OCI-LY7 (cell line): ENCODE measurements at regions of chr20 and their contacts with region 1.

Region 1: DNA sequence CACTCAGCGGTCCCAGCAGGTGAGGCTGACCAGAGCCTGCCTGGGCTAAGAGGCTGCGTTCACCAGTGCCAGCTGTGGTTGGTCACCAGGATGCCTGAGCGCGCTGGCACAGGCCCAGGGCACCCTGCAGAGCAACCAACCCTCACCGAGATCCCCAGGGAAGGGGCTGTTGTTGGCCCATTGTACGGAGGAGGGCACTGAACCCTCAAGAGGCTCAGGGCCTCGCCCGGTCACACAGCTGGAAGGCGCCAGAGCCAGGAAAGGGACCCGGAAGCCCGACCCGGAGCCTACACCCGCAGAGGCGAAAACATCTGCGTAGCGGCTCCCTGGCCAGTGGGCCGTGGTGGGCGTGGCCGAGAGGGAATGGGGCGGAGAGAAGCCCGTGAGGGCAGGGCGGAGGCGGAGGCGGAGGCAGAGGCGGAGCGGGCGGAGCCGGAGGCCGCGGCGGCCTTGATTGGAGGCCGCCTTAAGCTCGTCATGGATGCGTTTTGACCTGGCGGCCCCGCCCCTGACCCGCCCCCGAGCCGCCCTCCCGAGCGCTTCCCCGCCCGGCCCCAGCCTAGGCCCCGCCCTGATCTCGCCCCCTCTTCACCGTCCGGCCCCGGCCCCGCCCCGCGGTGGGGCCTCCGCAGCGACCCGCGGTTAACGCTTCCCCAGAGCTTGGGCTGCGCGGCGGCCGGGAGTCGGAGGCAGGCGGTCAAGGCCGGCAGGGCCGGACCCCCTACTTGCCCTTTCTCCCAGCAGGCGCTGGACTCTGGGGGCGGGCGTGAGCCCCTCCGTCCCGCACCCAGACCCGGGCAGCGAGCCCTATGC is 2.2 kb upstream of the MRGBP start:
- DNase-seq: peak; percentile 95
- H3K4me3 ChIP-seq: peak overlapping the region; percentile 78
- H3K27ac ChIP-seq: peak overlapping the region; percentile 83
- H3K4me1 ChIP-seq: peaks cover 47% of the 10 kb centered on the region
- CTCF ChIP-seq: no peak

Region 2: GRCh38 chr20:62407221-62407992 is 386.7 kb before region 1 on chr20 and contains the start of gene CABLES2:
- CTCF ChIA-PET with region 1: no interaction called
- POLR2A ChIA-PET with region 1: no interaction called
- intact Hi-C with region 1: loop called (anchors 5 kb)
- DNase-seq: peak; percentile 96
- H3K4me3 ChIP-seq: peak within 1 kb of the TSS; percentile 86
- H3K27ac ChIP-seq: peak within 1 kb of the TSS; percentile 69
- H3K4me1 ChIP-seq: peaks cover 42% of the 10 kb centered on the region
- CTCF ChIP-seq: peak; percentile 28; the same call in 1 of the 2 replicates
- total RNA-seq, gene CABLES2: 11.1 and 14.8 TPM in 2 replicates

Region 3: DNA sequence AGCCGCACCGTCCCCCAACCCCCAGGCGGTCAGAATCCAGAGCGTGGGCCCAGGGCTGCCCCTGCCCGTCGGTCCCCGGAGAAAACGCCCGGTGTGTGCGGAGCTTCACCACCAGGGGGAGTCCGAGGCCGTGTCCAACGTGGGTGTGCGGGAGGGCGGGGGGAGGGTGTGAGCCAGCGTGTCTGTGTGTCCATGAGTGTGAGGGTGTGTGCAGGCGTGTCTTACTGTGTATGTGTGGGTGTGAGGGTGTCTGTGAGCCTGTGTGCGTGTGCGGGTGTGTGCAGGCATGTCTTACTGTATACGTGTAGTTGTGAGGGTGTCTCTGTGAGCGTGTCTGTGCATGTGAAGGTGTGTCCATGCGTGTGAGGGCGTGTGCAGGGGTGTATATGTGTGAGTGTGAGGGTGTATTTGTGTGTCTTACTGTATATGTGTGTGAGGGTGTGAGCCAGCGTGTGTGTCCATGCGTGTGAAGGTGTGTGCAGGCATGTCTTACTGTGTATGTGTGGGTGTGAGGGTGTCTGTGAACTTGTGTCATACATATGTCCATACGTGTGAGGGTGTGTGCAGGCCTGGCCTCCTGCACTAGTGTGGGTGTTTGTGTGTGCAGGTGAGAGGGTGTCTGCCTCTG is 293.8 kb before region 1 on chr20:
- CTCF ChIA-PET with region 1: no interaction called
- POLR2A ChIA-PET with region 1: no interaction called
- intact Hi-C with region 1: loop called (anchors 2 kb)
- DNase-seq: peak; percentile 73
- H3K4me3 ChIP-seq: no peak overlapping the region
- H3K27ac ChIP-seq: no peak overlapping the region
- H3K4me1 ChIP-seq: peaks cover 18% of the 10 kb centered on the region
- CTCF ChIP-seq: peak; percentile 86

Region 4: GRCh38 chr20:62623488-62624324 is 170.4 kb before region 1 on chr20:
- CTCF ChIA-PET with region 1: no interaction called
- POLR2A ChIA-PET with region 1: interaction called, 3 read pairs
- intact Hi-C with region 1: loop called (anchors 1 kb)
- DNase-seq: peak; percentile 95
- H3K4me3 ChIP-seq: peak overlapping the region; percentile 58
- H3K27ac ChIP-seq: peak overlapping the region; percentile 75
- H3K4me1 ChIP-seq: peaks cover 51% of the 10 kb centered on the region
- CTCF ChIP-seq: no peak

Region 5: DNA sequence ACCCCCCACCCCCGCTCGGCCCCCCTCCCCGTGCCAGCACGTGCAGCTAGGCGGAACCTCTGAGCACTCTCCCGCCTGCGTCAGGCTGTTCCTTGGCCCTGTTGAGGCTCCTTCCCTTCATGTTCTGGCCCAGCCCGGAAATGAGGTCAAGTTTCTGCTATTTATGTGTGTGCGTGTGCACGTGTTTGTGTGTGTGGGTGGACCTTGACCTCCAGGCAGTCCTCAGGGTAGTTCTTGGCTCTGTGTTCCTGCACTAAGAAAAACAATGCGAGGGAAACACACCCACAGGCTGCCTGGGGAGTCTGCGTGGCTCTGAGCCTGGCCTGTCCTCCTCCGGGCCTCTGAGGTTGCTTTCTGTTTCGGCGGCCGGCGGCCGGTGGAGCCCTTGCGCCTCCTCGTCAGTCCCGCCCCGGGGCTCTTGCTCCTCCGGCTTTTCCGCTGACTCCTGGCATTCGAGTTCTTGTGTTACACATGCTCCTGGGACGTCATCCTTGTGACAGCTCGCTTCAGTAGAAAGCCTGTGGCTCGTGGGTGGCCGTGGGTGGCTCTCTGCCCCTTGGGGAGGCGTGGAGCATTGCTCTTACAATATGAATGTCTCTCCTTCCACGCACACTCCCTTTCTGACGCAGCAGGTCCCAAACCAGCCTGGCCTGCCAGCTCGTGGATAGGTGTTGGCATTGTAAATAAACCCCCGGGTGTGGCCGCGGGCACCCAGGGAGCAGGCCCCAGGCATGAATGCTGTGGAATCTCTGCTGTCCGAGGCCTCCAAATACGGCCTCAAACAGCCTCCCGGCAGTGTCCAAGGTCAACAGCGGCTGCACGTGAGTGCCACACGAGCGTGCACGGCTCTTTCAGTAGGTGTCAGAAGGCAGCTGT is 141.8 kb before region 1 on chr20:
- CTCF ChIA-PET with region 1: no interaction called
- POLR2A ChIA-PET with region 1: interaction called, 3 read pairs
- intact Hi-C with region 1: loop called (anchors 5 kb)
- DNase-seq: peak; percentile 80
- H3K4me3 ChIP-seq: peak overlapping the region; percentile 16
- H3K27ac ChIP-seq: peak overlapping the region; percentile 81
- H3K4me1 ChIP-seq: peaks cover 59% of the 10 kb centered on the region
- CTCF ChIP-seq: no peak

Region 6: GRCh38 chr20:62668441-62669027 is 125.6 kb before region 1 on chr20:
- CTCF ChIA-PET with region 1: no interaction called
- POLR2A ChIA-PET with region 1: no interaction called
- intact Hi-C with region 1: loop called (anchors 1 kb)
- DNase-seq: peak; percentile 24
- H3K4me3 ChIP-seq: no peak overlapping the region
- H3K27ac ChIP-seq: no peak overlapping the region
- H3K4me1 ChIP-seq: no peaks in the 10 kb centered on the region
- CTCF ChIP-seq: peak; percentile 76